ENCODE measurements at regions of chr22 and their contacts with region 1.

Region 1: GRCh38 chr22:45994491-45995404 is 17.8 kb upstream of the WNT7B start:
- DNase-seq: peak; percentile 83 to 96 (median 93)
- ATAC-seq: peak; percentile 32 to 46
- H3K4me3 ChIP-seq: no peak overlapping the region
- H3K27ac ChIP-seq: no peak overlapping the region
- H3K4me1 ChIP-seq: peaks cover 10% of the 10 kb centered on the region
- H3K27me3 ChIP-seq: no peaks in the 10 kb centered on the region

Region 2: GRCh38 chr22:46116491-46116958 is 121.8 kb after region 1 on chr22:
- intact Hi-C with region 1: loop called in 2 of 4 experiments (anchors 2 to 5 kb)
- DNase-seq: peak; percentile 95 to 99 (median 98)
- ATAC-seq: peak; percentile 74 to 75
- H3K4me3 ChIP-seq: no peak overlapping the region
- H3K27ac ChIP-seq: peak overlapping the region; percentile 16
- H3K4me1 ChIP-seq: peaks cover 5% of the 10 kb centered on the region
- H3K27me3 ChIP-seq: no peaks in the 10 kb centered on the region

Region 3: GRCh38 chr22:46296257-46297150 is 301.8 kb after region 1 on chr22 and contains the start of gene GTSE1:
- intact Hi-C with region 1: loop called in 1 of 4 experiments (anchors 5 kb)
- DNase-seq: peak; percentile 99 to 100 (median 99)
- ATAC-seq: peak; percentile 97 to 98
- H3K4me3 ChIP-seq: peak within 1 kb of the TSS; percentile 41
- H3K27ac ChIP-seq: peak within 1 kb of the TSS; percentile 91
- H3K4me1 ChIP-seq: peaks cover 5% of the 10 kb centered on the region
- H3K27me3 ChIP-seq: no peaks in the 10 kb centered on the region
- total RNA-seq, gene GTSE1: 0.42 to 1.8 (median 1.2) TPM

Region 4: DNA sequence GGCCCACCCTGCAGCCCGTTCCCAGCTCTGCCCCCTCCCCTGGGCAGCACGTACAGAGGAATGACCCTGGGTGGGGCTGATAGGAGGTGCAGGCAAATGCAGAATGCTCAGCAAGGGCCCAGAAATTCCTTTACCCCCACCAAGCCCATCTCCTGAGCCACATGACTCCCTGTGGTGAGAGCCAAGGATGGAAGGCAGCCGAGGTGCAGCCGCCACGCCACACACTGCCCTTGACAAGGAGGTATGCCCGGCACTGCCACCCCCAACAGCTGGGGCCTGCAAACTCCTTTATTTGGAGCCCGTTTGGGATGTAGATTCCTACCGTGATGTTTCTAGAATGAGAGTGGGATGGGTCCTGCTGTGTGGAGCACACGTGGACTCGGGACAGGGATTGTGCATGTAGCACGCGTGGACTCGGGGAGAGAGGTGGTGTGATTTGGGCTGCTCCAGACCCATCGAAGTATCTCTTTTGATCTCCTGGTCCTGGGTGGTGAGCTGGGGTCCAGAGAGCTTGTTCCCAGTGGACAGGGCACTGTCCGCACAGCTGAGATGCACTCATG is 314.9 kb after region 1 on chr22:
- intact Hi-C with region 1: loop called in 2 of 4 experiments (anchors 5 to 10 kb)
- DNase-seq: peak in 2 of 3 donors; percentile 73 to 78
- ATAC-seq: peak; percentile 66 to 77
- H3K4me3 ChIP-seq: no peak overlapping the region
- H3K27ac ChIP-seq: peak overlapping the region; percentile 22
- H3K4me1 ChIP-seq: no peaks in the 10 kb centered on the region
- H3K27me3 ChIP-seq: no peaks in the 10 kb centered on the region